Panc1 (cell line): ENCODE measurements at regions of chr6 and their contacts with region 1.

Region 1: DNA sequence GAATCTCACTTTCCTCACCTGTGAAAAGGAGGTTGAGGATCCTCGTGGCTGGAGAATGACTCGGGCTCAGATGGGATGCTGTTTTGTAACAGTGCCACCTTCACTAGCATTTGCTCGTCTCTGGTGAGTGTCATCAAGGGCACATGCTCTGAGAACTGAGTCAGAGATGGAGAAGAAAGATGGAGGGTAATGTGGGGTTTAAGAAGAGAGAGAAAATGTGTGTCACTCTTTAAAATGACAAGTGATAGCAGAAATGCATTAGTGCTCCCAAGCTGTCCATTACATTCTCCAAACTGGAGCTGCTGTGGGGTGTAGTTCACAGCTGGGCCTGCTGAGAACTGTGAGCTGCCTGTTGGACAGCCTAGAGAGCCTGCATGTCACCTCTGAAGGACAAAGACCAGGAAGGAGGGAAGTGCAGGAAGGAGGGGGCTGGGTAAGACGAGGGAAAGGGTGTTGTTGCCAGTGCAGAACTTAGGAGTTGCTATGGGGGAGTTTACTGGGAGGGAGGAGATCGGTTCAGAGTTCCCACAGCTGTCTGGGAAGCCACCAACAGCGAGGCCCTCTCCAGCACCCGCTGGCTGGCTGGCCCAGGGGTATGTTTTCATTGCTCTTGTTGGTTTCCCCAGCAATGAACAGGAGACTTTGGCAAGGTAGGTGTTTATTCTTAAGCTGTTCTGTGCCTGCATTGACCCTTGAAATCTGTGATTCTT is 19.8 kb downstream of the GMPR start:
- DNase-seq: no peak
- ATAC-seq: 0 out of 2 replicates have a peak, but pooled peaks have one; percentile 51
- H3K4me3 ChIP-seq: no peak overlapping the region
- H3K27ac ChIP-seq: no peak overlapping the region
- H3K4me1 ChIP-seq: no peaks in the 10 kb centered on the region
- H3K27me3 ChIP-seq: no peaks in the 10 kb centered on the region
- CTCF ChIP-seq: no peak

Region 2: DNA sequence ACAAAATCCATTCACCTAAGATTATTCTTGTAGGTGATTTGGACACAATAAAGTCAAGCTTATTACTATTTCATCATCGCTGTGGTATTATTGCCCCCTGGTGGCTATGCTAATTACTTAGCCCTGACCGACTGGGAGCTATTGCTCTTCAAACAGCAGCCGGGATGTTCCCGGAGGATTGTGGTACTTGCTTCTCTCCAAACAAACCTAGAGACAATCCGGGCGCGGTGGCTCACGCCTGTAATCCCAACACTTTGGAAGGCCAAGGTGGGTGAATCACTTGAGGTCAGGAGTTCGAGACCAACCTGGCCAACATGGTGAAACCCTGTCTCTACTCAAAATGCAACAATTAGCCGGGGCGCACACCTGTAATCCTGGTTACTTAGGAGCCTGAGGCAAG is 828.3 kb after region 1 on chr6:
- CTCF ChIA-PET with region 1: interaction called, 10 read pairs
- POLR2A ChIA-PET with region 1: no interaction called
- in situ Hi-C with region 1: no loop called
- intact Hi-C with region 1: no loop called
- DNase-seq: peak; percentile 57
- ATAC-seq: peak; percentile 94
- H3K4me3 ChIP-seq: no peak overlapping the region
- H3K27ac ChIP-seq: no peak overlapping the region
- H3K4me1 ChIP-seq: no peaks in the 10 kb centered on the region
- H3K27me3 ChIP-seq: peaks cover 6% of the 10 kb centered on the region; the same call in 1 of the 2 replicates
- CTCF ChIP-seq: peak; percentile 83